Activated naive CD4-positive, alpha-beta T cell treated with anti-CD3 and anti-CD28 coated beads for 36 hours (primary cell): ENCODE measurements at regions of chr3 and their contacts with region 1.

Region 1: DNA sequence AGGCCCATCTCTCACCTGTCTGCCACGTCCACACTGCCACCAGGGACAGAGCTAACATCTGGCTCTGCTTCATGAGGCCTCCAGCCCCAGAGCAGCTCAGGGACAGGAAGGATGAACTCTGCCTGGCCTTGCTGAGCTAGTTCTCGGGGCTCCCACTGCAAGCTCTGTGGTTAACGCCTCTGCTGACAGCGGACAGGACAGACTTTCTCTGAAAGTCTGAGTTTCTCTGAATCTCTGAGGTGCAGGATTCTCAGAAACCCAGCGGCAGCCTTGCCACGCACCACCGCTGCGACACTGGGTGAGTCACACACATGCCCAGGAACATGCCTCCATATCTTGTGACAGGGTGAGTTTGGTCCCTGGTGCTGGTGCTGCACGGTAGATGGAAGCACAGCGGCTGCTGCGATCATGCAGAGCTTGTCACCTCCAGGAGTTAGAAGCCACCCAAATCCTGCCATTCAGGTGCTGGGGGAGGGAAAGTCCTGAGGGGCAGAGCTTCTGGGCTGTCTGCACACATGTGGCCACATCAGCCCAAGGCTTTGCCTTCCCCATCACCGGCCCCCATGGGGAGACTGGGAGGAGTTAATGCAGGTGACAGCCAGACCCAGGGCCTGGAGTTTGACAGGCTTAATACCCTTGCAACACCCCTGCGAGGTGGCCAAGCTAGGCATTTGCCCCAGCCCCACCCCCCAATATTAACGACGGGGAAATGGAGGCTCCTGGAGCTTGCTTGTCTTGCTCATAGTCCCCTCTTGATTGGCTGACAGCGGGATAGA is 267.0 kb downstream of the PLCL2 start:
- DNase-seq: peak; percentile 95
- H3K4me3 Mint-ChIP-seq: peak overlapping the region; percentile 28
- H3K27ac Mint-ChIP-seq: peak overlapping the region; percentile 85
- H3K4me1 Mint-ChIP-seq: peaks cover 25% of the 10 kb centered on the region
- H3K27me3 Mint-ChIP-seq: no peaks in the 10 kb centered on the region

Region 2: GRCh38 chr3:16797523-16798457 is 354.0 kb before region 1 on chr3:
- CTCF ChIA-PET with region 1: no interaction called
- intact Hi-C with region 1: loop called (anchors 2 kb)
- DNase-seq: no peak
- H3K4me3 Mint-ChIP-seq: no peak overlapping the region
- H3K27ac Mint-ChIP-seq: peak overlapping the region; percentile 77
- H3K4me1 Mint-ChIP-seq: peaks cover 38% of the 10 kb centered on the region
- H3K27me3 Mint-ChIP-seq: no peaks in the 10 kb centered on the region

Region 3: DNA sequence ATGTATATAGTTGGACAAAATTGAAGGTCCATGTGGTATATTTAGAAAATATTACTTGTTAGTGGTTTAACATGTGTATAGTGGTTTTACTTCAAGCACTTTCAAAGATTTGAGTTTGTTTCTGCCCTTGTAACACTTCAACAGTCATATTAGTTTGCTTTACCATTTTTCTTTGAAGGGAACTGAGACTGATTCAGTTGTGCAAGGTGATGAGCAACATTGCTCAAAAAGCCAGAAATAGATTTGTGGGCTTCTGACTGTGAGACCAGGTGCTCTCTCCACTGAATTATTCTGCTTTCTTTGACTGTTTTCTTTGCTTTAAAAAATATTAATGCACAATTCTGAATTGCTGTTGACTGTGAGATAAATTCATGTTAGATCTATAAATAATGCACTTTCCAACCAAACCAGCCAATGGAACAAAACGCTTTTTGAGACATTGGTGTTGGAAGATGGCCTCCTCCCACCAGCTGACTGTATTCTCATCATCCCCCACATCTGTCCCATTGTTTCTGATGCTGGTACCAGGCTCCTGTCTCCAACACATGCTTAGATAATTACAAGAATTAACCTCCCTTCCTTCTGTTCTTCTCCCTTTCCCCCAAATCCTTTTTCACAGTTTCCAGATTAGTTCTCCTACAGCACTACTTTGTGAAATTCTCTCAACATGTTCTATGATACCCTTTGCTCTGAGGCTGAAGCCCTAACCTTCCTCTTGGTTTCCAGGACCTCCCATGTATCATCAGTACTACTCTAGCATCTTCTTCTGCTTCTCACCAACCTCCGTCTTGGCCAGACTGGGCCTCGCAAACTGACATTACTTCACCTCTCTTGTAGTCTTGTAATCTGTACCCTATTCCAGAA is 239.2 kb before region 1 on chr3:
- CTCF ChIA-PET with region 1: no interaction called
- intact Hi-C with region 1: loop called (anchors 1 kb)
- DNase-seq: no peak
- H3K4me3 Mint-ChIP-seq: no peak overlapping the region
- H3K27ac Mint-ChIP-seq: peak overlapping the region; percentile 57
- H3K4me1 Mint-ChIP-seq: peaks cover 77% of the 10 kb centered on the region
- H3K27me3 Mint-ChIP-seq: no peaks in the 10 kb centered on the region

Region 4: DNA sequence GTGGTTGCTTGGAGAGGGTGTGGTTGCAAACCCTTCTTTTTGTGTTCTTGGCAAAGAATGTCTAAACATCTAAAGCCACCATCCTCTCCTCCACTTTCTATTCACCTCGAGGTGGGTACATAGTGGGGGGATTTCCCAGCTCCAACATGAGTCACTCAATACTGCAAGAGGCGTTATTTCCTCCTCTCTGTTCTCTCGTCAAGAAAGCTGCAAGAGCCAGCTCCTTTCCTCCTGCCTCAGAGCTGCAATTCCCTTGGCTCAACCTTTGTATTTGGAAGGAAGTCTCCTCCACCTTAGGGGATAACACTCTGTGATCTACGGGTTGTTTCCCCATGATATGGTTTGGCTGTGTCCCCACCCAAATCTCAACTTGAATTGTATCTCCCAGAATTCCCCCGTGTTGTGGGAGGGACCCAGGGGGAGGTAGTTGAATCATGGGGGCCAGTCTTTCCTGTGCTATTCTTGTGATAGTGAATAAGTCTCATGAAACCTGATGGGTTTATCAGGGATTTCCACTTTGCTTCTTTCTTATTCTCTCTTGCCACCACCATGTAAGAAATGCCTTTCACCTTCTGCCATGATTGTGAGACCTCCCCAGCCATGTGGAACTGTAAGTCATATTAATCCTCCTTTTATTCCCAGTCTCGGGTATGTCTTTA is 128.7 kb before region 1 on chr3:
- CTCF ChIA-PET with region 1: no interaction called
- intact Hi-C with region 1: loop called (anchors 1 kb)
- DNase-seq: peak; percentile 82
- H3K4me3 Mint-ChIP-seq: peak overlapping the region; percentile 60
- H3K27ac Mint-ChIP-seq: peak overlapping the region; percentile 90
- H3K4me1 Mint-ChIP-seq: peaks cover 73% of the 10 kb centered on the region
- H3K27me3 Mint-ChIP-seq: no peaks in the 10 kb centered on the region

Region 5: DNA sequence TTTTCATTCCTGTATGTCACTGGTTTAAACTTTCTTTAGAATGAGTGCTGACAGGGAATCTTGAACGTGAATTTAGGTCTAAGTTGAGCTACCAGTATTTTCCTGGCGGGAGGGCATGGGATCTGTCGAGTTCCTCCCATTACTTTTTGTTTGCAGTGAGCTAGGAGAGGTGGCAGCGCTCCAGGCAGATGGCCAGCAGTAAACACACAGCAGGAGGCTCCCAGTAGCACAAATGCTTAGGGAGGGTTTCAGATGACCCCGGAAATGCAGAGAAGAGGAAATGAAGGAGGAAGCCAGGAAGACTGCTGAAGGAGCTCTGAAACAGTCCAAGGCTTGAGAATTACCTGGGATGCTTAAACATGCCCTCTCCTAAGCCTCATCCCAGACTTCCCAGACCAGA is 81.2 kb before region 1 on chr3:
- CTCF ChIA-PET with region 1: no interaction called
- intact Hi-C with region 1: no loop called
- DNase-seq: no peak
- H3K4me3 Mint-ChIP-seq: no peak overlapping the region
- H3K27ac Mint-ChIP-seq: no peak overlapping the region
- H3K4me1 Mint-ChIP-seq: peaks cover 33% of the 10 kb centered on the region
- H3K27me3 Mint-ChIP-seq: no peaks in the 10 kb centered on the region

Region 6: GRCh38 chr3:17182166-17182565 is 30.4 kb after region 1 on chr3:
- CTCF ChIA-PET with region 1: interaction called, 3 read pairs
- intact Hi-C with region 1: loop called (anchors 1 kb)
- DNase-seq: no peak
- H3K4me3 Mint-ChIP-seq: no peak overlapping the region
- H3K27ac Mint-ChIP-seq: no peak overlapping the region
- H3K4me1 Mint-ChIP-seq: peaks cover 22% of the 10 kb centered on the region
- H3K27me3 Mint-ChIP-seq: no peaks in the 10 kb centered on the region